Ascending aorta (tissue), 2 donors: ENCODE measurements at regions of chr2 and their contacts with region 1.

Region 1: GRCh38 chr2:144937910-144938709 is 418.2 kb upstream of the ZEB2 start:
- DNase-seq: no peak
- H3K4me3 ChIP-seq: peak overlapping the region; percentile 11 to 48
- H3K27ac ChIP-seq: peak overlapping the region; percentile 76 to 82
- H3K4me1 ChIP-seq: peaks cover 7 to 44% of the 10 kb centered on the region in 2 donors
- H3K27me3 ChIP-seq: no peaks in the 10 kb centered on the region
- CTCF ChIP-seq: no peak

Region 2: GRCh38 chr2:144996225-144996795 is 58.2 kb after region 1 on chr2:
- intact Hi-C with region 1: loop called (anchors 5 kb)
- DNase-seq: no peak
- H3K4me3 ChIP-seq: no peak overlapping the region
- H3K27ac ChIP-seq: peak overlapping the region; percentile 12 to 58
- H3K4me1 ChIP-seq: peaks cover 0 to 17% of the 10 kb centered on the region in 2 donors
- H3K27me3 ChIP-seq: no peaks in the 10 kb centered on the region
- CTCF ChIP-seq: no peak

Region 3: GRCh38 chr2:145022666-145023330 is 84.7 kb after region 1 on chr2:
- intact Hi-C with region 1: loop called (anchors 5 kb)
- DNase-seq: no peak
- H3K4me3 ChIP-seq: peak overlapping the region; percentile 22 to 52
- H3K27ac ChIP-seq: peak overlapping the region; percentile 55 to 62
- H3K4me1 ChIP-seq: peaks cover 0 to 3% of the 10 kb centered on the region in 2 donors
- H3K27me3 ChIP-seq: no peaks in the 10 kb centered on the region
- CTCF ChIP-seq: no peak